ENCODE measurements at regions of chr19 and their contacts with region 1.

Region 1: GRCh38 chr19:662962-663681 is at the start of gene RNF126:
- DNase-seq: peak; percentile 75 to 90 (median 86)
- H3K4me3 ChIP-seq: peak within 1 kb of the TSS; percentile 66 to 100 (median 96)
- H3K27ac ChIP-seq: peak within 1 kb of the TSS; percentile 86 to 99 (median 97)
- H3K27me3 ChIP-seq: no peaks in the 10 kb centered on the region
- CTCF ChIP-seq: peak in 19 of 56 donors; percentile 5 to 36 (median 25)
- total RNA-seq, gene RNF126: 22.4 to 58.2 (median 41.2) TPM

Region 2: DNA sequence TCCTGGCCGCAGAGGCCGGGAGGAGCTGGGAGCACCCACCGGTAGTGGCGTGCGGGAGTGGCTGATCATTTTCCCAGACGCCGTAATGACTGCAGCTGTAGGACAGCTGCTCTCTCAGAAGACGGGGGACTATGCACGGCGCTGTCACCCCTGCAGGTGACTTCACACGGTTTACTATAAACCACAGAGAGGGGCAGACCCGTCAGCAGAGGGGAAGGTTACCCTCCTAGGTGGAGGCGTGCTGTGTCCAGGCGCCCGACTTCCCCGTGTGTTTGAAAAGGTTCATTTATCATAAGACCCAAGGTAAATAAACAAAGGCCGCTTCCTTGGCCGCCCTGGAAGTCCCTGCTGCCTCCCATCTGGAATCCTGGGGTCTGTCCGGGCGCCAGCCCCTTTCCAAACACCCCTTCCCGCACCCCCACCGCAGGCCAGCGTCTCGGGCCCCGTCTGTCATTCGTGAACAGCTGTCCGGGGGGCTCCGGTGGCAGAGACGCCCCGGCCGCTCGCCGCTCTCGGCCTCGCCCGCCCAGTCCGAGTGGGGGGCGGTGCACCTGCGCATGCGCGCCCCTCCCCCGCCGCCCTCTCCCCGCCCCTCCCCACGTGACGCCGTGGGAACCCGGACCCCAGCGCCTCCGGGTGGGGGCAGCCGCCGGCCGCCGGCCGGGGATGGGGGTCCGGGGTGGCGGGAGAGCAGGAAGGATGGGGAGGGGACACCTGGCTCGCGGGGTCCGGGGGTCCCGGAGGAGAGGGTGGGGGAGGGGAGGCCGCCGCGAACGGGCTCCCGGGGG is 203.2 kb before region 1 on chr19:
- intact Hi-C with region 1: no loop called
- DNase-seq: peak; percentile 52 to 86 (median 66)
- H3K4me3 ChIP-seq: peak overlapping the region; percentile 49 to 95 (median 79)
- H3K27ac ChIP-seq: peak overlapping the region in 58 of 59 donors; percentile 37 to 96 (median 89)
- H3K27me3 ChIP-seq: no peaks in the 10 kb centered on the region
- CTCF ChIP-seq: peak in 13 of 56 donors; percentile 6 to 40 (median 15)

Region 3: DNA sequence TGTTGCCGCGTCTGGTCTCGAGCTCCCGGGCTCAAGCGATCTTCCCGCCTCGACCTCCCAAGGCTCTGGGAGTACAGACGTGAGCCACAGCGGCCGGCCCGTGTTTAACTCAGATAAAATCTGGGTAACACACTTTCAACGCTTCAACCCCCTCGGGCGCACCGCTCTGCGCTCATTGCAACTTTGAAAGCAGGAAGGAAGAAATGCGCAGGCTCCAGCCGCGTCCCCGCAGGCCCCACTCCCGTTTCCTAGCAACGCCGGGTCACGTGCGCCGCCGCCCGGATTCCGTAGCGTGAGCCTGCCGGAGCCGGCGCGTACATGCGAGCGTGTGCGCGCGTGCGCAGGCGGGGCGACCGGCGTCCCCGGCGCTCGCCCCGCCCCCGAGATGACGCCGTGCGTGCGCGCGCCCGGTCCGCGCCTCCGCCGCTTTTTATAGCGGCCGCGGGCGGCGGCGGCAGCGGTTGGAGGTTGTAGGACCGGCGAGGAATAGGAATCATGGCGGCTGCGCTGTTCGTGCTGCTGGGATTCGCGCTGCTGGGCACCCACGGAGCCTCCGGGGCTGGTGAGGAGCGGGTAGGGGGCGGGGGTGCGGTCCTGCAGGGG is 90.9 kb before region 1 on chr19 and contains the start of gene BSG:
- intact Hi-C with region 1: loop called (anchors 2 to 5 kb)
- DNase-seq: peak; percentile 94 to 99 (median 97)
- H3K4me3 ChIP-seq: peak within 1 kb of the TSS; percentile 69 to 100 (median 97)
- H3K27ac ChIP-seq: peak within 1 kb of the TSS; percentile 28 to 98 (median 91)
- H3K27me3 ChIP-seq: peaks cover 0 to 4% (median 0%) of the 10 kb centered on the region in 45 donors
- CTCF ChIP-seq: peak in 17 of 56 donors; percentile 2 to 38 (median 21)
- total RNA-seq, gene BSG: 350 to 867 (median 549) TPM

Region 4: GRCh38 chr19:633068-633785 is 29.9 kb before region 1 on chr19 and contains the start of gene POLRMT:
- intact Hi-C with region 1: loop called in 1 of 2 experiments (anchors 1 kb)
- DNase-seq: peak; percentile 95 to 98 (median 97)
- H3K4me3 ChIP-seq: peak within 1 kb of the TSS; percentile 58 to 100 (median 95)
- H3K27ac ChIP-seq: peak within 1 kb of the TSS in 52 of 59 donors; percentile 37 to 92 (median 76)
- H3K27me3 ChIP-seq: no peaks in the 10 kb centered on the region
- CTCF ChIP-seq: peak in 43 of 56 donors; percentile 9 to 67 (median 36)
- total RNA-seq, gene POLRMT: 27.8 to 91.2 (median 61.9) TPM

Region 5: GRCh38 chr19:728011-728410 is 64.9 kb after region 1 on chr19:
- intact Hi-C with region 1: loop called in 1 of 2 experiments (anchors 2 kb)
- DNase-seq: no peak
- H3K4me3 ChIP-seq: no peak overlapping the region
- H3K27ac ChIP-seq: peak overlapping the region in 42 of 59 donors; percentile 17 to 83 (median 60)
- H3K27me3 ChIP-seq: no peaks in the 10 kb centered on the region
- CTCF ChIP-seq: no peak

Region 6: GRCh38 chr19:737581-738093 is 74.5 kb after region 1 on chr19:
- intact Hi-C with region 1: loop called (anchors 1 to 2 kb)
- DNase-seq: peak in 3 of 10 donors; percentile 26 to 56 (median 45)
- H3K4me3 ChIP-seq: no peak overlapping the region
- H3K27ac ChIP-seq: peak overlapping the region in 1 of 59 donors; percentile 8
- H3K27me3 ChIP-seq: no peaks in the 10 kb centered on the region
- CTCF ChIP-seq: peak in 53 of 56 donors; percentile 32 to 64 (median 51)

Region 7: DNA sequence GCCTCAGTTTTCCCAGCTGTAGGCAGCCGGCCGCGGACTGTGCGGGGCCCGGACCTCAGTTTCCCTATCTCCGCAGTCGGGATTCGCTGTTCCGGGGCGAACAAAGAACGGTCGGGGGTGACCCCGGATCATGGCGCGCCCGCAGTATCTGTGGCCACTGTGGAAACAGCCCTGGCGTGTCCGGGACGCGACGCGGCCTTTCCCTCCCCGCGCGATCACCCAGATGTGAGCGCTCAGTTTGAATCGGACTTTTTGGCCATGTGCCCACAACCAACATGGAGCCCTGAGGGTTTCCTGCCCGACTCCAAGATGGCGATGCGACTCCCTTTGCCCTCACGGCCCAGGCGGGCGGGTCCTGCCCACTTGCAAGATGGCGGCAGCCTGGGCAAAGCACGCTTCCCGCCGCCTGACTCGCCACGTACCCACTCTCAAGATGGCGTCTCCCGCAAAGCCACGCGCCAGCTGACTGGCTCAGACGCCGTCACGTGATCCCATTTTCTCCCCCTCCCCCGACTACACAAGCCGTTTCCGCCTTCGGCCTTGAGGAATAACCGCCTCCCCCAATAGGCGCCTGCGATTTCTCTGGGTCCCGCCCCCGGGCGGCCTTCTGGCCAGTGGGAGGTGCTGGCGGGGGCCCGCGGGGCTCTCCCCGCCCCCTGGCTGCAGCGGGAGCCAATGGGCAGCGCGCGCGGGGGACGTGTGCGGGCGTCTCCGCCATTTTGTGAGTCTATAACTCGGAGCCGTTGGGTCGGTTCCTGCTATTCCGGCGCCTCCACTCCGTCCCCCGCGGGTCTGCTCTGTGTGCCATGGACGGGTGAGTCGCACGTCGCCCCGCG is 133.8 kb after region 1 on chr19 and contains the start of gene PTBP1:
- intact Hi-C with region 1: loop called (anchors 1 to 2 kb)
- DNase-seq: peak; percentile 99 to 100 (median 100)
- H3K4me3 ChIP-seq: peak within 1 kb of the TSS; percentile 59 to 99 (median 87)
- H3K27ac ChIP-seq: peak within 1 kb of the TSS; percentile 70 to 100 (median 95)
- H3K27me3 ChIP-seq: no peaks in the 10 kb centered on the region
- CTCF ChIP-seq: peak in 41 of 56 donors; percentile 6 to 66 (median 35)
- total RNA-seq, gene PTBP1: 40.5 to 125 (median 72.0) TPM

Region 8: GRCh38 chr19:925526-926322 is 262.6 kb after region 1 on chr19 and contains the start of gene ARID3A:
- intact Hi-C with region 1: loop called in 1 of 2 experiments (anchors 10 kb)
- DNase-seq: peak; percentile 69 to 86 (median 76)
- H3K4me3 ChIP-seq: peak within 1 kb of the TSS; percentile 65 to 95 (median 82)
- H3K27ac ChIP-seq: peak within 1 kb of the TSS in 57 of 59 donors; percentile 29 to 88 (median 77)
- H3K27me3 ChIP-seq: peaks cover 0 to 8% (median 6%) of the 10 kb centered on the region in 45 donors
- CTCF ChIP-seq: peak in 23 of 56 donors; percentile 4 to 51 (median 15)
- total RNA-seq, gene ARID3A: 3.8 to 17.6 (median 8.7) TPM

Measured in dorsolateral prefrontal cortex (tissue), 120 donors.